Esophagus muscularis mucosa (tissue), 4 donors: ENCODE measurements at regions of chr12 and their contacts with region 1.

Region 1: GRCh38 chr12:46124848-46125619 is 134.7 kb upstream of the SCAF11 start:
- DNase-seq: no peak
- H3K4me3 ChIP-seq: peak overlapping the region; percentile 30 to 51 (median 42)
- H3K27ac ChIP-seq: peak overlapping the region in 3 of 4 donors; percentile 25 to 42 (median 37)
- H3K4me1 ChIP-seq: peaks cover 12 to 21% (median 15%) of the 10 kb centered on the region in 4 donors
- H3K27me3 ChIP-seq: no peaks in the 10 kb centered on the region
- CTCF ChIP-seq: peak; percentile 72 to 80 (median 72)
- EP300 ChIP-seq: no peak
- POLR2A ChIP-seq: no peak

Region 2: DNA sequence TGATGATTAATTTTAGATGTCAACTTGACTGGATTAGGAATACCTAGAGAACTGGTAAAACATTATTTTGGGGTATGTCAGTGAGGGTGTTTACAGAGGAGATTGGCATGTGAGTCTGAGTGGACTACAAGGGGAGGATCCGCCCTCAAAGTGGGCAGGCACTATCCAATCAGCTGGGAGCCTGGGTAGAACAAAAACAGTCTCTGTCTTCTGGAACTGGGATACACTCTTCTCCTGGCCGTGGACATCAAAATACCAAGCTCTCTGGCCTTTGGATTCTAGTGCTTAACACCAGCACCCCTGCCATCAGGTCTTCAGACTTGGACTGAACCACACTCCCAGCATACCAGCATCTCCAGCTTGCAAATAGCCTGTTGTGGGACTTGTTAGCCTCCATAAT is 130.3 kb before region 1 on chr12:
- intact Hi-C with region 1: no loop called
- DNase-seq: no peak
- H3K4me3 ChIP-seq: no peak overlapping the region
- H3K27ac ChIP-seq: no peak overlapping the region
- H3K4me1 ChIP-seq: peaks cover 0 to 7% (median 3%) of the 10 kb centered on the region in 4 donors
- H3K27me3 ChIP-seq: no peaks in the 10 kb centered on the region
- CTCF ChIP-seq: no peak
- EP300 ChIP-seq: no peak
- POLR2A ChIP-seq: no peak

Region 3: DNA sequence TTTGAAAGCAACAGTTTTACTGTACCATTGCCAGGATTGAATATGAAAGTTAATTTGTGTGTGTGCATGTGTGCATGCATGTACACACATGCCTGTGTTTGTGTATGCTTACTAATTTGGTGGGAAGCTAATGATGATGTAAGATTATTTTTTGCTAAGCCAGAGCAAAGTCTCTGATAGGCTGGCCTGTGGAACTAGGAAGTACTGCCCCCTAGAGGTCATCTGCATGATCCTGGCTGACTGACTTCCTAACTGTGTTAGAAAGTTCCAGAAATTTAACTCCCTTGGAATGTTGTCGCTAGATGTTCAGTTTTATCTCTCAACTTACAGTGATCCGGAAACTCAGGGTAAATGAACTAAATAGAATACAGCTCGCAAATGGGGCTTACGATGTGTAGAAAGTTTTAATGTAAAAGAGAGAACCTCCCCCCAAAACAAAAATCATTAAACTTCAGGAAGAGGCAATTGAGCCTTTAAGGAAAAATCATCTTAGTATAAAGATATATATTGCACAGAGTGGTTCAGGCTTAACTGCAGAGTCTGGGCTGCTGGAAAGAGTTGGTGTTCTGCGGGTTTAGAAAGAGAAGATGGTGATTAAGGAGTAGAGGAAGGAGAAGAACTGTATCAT is 178.1 kb after region 1 on chr12:
- intact Hi-C with region 1: loop called (anchors 10 kb)
- DNase-seq: no peak
- H3K4me3 ChIP-seq: no peak overlapping the region
- H3K27ac ChIP-seq: no peak overlapping the region
- H3K4me1 ChIP-seq: peaks cover 0 to 17% (median 14%) of the 10 kb centered on the region in 4 donors
- H3K27me3 ChIP-seq: no peaks in the 10 kb centered on the region
- CTCF ChIP-seq: peak; percentile 35 to 65 (median 53)
- EP300 ChIP-seq: no peak
- POLR2A ChIP-seq: no peak